MCF 10A (cell line): ENCODE measurements at regions of chr6 and their contacts with region 1.

Region 1: DNA sequence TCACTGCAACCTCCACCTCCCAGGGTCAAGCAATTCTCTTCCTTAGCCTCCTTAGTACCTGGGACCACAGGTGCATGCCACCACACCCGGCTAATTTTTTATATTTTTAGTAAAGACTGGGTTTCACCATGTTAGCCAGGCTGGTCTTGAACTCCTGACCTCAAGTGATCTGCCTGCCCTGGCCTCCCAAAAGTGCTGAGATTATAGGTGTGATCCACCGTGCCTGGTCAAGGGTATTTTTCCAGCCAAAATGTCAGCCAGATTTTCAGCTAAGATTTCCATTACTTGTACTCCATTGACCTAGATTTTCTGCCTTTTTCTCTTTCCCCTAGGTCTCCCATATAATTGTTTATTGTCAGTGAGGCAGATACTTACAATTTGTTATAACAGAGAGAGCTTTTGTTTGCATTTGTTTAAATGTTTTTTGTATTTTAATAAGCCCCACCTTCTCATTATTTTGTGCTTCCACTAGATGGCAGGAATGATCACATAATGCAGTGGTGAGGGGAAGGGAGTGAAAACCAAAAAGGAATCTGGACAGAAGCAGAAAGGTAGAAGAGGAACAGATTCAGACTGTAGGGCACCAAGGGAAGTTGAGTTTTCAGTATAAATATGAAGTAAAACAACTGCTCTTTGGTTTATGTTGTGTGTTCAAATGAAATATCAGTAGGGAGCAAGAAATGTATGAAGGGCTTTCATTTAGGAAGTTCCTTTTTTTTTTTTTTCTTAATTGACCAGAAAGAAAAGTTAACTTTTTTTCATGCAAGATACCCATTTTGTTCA is 29.7 kb downstream of the RPF2 start:
- DNase-seq: peak; percentile 55
- H3K4me3 Mint-ChIP-seq: no peak overlapping the region
- H3K27ac Mint-ChIP-seq: no peak overlapping the region
- H3K4me1 Mint-ChIP-seq: no peaks in the 10 kb centered on the region
- H3K27me3 Mint-ChIP-seq: no peaks in the 10 kb centered on the region
- CTCF ChIP-seq: peak; percentile 45

Region 2: DNA sequence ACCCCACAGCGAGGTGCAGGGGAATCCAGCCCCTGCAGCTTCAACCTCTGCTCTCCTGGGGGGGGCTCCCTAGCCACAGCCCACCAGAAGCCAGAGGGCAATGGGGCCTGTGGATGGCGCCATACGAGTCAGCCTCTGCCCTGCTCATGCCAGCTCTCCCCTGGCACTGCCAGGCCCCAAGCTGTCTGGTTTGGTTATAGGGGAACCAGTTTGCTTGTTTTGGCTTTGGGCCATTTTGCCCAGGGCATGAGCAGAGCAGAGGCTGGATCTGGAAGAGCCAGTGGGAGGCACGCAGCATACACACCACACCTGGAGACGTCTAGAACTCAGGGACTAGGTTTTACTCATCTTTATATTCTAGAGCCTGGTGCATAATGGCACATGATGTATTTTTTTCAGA is 468.4 kb before region 1 on chr6:
- CTCF ChIA-PET with region 1: no interaction called
- POLR2A ChIA-PET with region 1: no interaction called
- intact Hi-C with region 1: no loop called
- DNase-seq: peak; percentile 89
- H3K4me3 Mint-ChIP-seq: no peak overlapping the region
- H3K27ac Mint-ChIP-seq: no peak overlapping the region
- H3K4me1 Mint-ChIP-seq: peaks cover 24% of the 10 kb centered on the region
- H3K27me3 Mint-ChIP-seq: no peaks in the 10 kb centered on the region
- CTCF ChIP-seq: no peak

Region 3: DNA sequence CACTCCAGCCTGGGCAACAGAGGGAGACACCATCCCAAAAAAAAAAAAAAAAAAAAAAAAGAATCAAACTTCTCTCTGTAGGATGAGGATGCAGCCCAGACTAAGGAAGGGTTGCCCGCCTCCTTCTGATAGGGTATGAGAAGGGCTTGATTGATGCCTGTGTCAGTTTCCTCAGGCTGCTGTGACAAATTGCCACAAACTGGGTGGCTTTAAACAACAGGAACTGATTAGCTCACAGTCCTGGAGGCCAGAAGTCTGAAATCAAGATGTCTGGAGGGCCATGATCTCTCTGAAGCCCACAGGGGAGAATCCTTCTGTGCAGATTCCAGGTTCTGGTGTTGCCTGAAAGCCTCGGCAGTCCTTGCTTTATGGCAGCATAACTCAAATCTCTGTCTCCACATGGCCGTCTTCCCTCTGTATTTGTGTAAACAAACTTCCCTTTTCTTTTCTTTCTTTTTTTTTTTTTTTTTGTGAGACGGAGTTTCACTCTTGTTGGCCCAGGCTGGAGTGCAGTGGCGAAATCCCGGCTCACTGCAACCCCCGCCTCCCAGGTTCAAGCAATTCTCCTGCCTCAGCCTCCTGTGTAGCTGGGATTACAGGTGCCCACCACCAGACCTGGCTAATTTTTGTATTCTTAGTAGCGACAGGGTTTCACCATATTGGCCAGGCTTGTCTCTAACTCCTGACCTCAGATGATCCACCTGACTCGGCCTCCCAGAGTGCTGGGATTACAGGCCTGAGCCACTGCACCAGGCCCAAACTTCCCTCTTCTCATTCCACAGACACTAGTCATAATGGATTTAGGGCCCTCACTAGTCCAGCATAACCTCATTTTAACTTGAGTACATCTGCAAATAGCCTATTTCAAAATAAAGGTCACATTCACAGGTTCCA is 185.1 kb before region 1 on chr6:
- CTCF ChIA-PET with region 1: no interaction called
- POLR2A ChIA-PET with region 1: no interaction called
- intact Hi-C with region 1: no loop called
- DNase-seq: no peak
- H3K4me3 Mint-ChIP-seq: no peak overlapping the region
- H3K27ac Mint-ChIP-seq: no peak overlapping the region
- H3K4me1 Mint-ChIP-seq: peaks cover 11% of the 10 kb centered on the region
- H3K27me3 Mint-ChIP-seq: no peaks in the 10 kb centered on the region
- CTCF ChIP-seq: no peak

Region 4: DNA sequence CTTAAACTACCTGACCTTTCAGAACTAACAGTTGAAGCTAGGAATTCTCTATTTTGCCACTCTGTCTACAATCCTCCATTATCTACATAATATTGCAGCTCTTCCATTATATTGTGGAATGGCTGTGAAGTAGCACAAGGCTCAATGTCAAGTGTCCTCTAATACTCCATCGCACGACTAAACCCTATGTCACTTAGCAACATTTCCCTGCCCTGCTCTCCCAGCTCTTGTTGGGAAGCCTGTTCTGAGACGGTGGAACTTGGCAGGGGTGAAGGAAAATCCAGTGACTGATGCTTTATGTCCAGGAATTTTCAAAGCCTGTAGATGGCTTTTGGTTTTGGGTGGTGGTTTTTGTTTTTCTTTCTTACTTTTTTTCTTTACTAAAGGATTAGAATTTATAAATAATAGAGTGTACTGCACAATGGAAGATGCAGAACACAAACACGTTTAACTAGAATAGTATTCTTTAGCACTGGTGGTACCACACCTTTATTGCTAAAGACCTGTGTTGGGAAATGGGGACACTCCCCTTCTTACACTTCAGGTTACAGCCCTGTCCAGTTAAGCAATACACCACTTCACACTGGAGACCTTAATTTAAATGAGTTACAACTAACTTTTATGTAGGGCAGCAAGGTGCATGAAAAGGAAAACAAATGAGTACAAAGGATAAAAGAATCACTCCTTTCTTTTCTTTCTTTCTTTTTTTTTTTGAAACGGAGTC is 157.6 kb before region 1 on chr6:
- CTCF ChIA-PET with region 1: no interaction called
- POLR2A ChIA-PET with region 1: no interaction called
- intact Hi-C with region 1: no loop called
- DNase-seq: peak; percentile 72
- H3K4me3 Mint-ChIP-seq: no peak overlapping the region
- H3K27ac Mint-ChIP-seq: no peak overlapping the region
- H3K4me1 Mint-ChIP-seq: peaks cover 11% of the 10 kb centered on the region
- H3K27me3 Mint-ChIP-seq: no peaks in the 10 kb centered on the region
- CTCF ChIP-seq: no peak

Region 5: GRCh38 chr6:110981202-110981600 is 30.4 kb before region 1 on chr6:
- CTCF ChIA-PET with region 1: interaction called, 23 read pairs
- POLR2A ChIA-PET with region 1: interaction called, 4 read pairs
- intact Hi-C with region 1: no loop called
- DNase-seq: no peak
- H3K4me3 Mint-ChIP-seq: peak overlapping the region; percentile 99
- H3K27ac Mint-ChIP-seq: peak overlapping the region; percentile 100
- H3K4me1 Mint-ChIP-seq: peaks cover 16% of the 10 kb centered on the region
- H3K27me3 Mint-ChIP-seq: no peaks in the 10 kb centered on the region
- CTCF ChIP-seq: no peak

Region 6: DNA sequence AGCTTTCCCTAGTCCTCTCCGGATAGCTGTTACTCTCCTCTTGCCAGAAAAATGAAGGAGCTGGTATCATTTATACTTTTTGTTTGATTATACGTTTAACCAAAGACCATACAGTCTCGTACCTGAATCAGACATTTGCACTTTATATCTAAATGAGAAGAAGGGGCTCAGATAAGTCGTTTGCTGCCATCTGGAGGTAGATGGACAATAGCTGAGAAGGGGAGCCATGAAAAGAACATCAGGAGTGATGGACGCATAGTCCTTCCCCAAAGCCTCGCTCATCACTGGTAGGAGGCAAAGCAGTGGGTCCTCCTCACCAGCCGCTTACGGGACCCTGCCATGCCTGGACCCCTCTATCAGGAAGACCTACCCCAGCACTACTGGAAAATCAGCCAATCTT is 15.7 kb after region 1 on chr6:
- CTCF ChIA-PET with region 1: interaction called, 25 read pairs
- POLR2A ChIA-PET with region 1: interaction called, 3 read pairs
- intact Hi-C with region 1: no loop called
- DNase-seq: peak; percentile 9
- H3K4me3 Mint-ChIP-seq: no peak overlapping the region
- H3K27ac Mint-ChIP-seq: no peak overlapping the region
- H3K4me1 Mint-ChIP-seq: no peaks in the 10 kb centered on the region
- H3K27me3 Mint-ChIP-seq: no peaks in the 10 kb centered on the region
- CTCF ChIP-seq: no peak

Region 7: GRCh38 chr6:111038534-111039252 is 27.1 kb after region 1 on chr6:
- CTCF ChIA-PET with region 1: interaction called, 11 read pairs
- POLR2A ChIA-PET with region 1: no interaction called
- intact Hi-C with region 1: no loop called
- DNase-seq: no peak
- H3K4me3 Mint-ChIP-seq: no peak overlapping the region
- H3K27ac Mint-ChIP-seq: no peak overlapping the region
- H3K4me1 Mint-ChIP-seq: peaks cover 5% of the 10 kb centered on the region
- H3K27me3 Mint-ChIP-seq: no peaks in the 10 kb centered on the region
- CTCF ChIP-seq: no peak

Region 8: GRCh38 chr6:112549749-112550148 is 1538.2 kb after region 1 on chr6:
- CTCF ChIA-PET with region 1: no interaction called
- POLR2A ChIA-PET with region 1: no interaction called
- intact Hi-C with region 1: no loop called
- DNase-seq: no peak
- H3K4me3 Mint-ChIP-seq: no peak overlapping the region
- H3K27ac Mint-ChIP-seq: no peak overlapping the region
- H3K4me1 Mint-ChIP-seq: no peaks in the 10 kb centered on the region
- H3K27me3 Mint-ChIP-seq: no peaks in the 10 kb centered on the region
- CTCF ChIP-seq: no peak